ENCODE measurements at regions of chr9 and their contacts with region 1.

Region 1: DNA sequence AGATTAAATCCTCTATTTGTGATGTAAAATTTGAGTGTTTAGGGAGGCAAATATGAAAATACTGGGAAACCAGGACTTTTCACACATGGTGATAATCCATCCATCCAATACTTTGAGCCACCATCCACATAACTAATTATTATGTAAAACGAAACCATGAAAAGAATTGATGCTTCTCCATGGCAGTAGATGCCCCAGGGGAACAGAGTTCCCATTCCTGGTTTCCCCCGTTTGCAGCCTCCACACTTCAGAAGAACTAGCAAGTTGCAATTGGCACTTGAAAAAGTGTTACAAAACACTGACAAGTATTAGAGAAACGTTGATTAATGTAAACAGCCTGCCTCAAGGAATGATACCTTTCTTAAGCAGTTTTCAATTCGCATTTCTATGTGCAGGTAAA is 9.7 kb upstream of the TLE1 start:
- DNase-seq: no peak
- ATAC-seq: no peak
- H3K4me3 Mint-ChIP-seq: no peak overlapping the region
- H3K27ac Mint-ChIP-seq: no peak overlapping the region; the same call in 1 of the 2 replicates
- H3K4me1 Mint-ChIP-seq: peaks cover 35% of the 10 kb centered on the region
- H3K27me3 Mint-ChIP-seq: no peaks in the 10 kb centered on the region
- CTCF ChIP-seq: no peak

Region 2: DNA sequence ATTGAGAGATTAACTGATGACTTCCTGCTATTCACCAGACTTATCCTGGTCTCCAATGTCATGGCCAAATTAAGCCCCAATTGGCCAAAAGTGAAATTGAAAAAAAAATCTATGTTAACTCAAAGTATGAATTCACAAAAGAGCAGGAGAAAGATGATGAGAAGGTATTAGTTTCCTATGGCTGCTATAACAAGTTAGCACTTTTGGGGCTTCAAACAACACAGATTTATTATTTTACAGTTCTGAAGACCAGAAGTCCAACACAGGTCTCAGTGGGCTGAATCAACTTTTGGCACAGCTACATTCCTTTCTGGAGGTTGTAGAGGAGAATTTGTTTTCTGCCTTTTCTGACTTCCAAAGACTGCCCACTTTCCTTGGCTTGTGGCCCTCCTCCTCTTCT is 68.8 kb after region 1 on chr9:
- CTCF ChIA-PET with region 1: no interaction called
- POLR2A ChIA-PET with region 1: no interaction called
- DNase-seq: no peak
- ATAC-seq: no peak
- H3K4me3 Mint-ChIP-seq: no peak overlapping the region
- H3K27ac Mint-ChIP-seq: no peak overlapping the region
- H3K4me1 Mint-ChIP-seq: peaks cover 12% of the 10 kb centered on the region
- H3K27me3 Mint-ChIP-seq: no peaks in the 10 kb centered on the region
- CTCF ChIP-seq: no peak

Region 3: DNA sequence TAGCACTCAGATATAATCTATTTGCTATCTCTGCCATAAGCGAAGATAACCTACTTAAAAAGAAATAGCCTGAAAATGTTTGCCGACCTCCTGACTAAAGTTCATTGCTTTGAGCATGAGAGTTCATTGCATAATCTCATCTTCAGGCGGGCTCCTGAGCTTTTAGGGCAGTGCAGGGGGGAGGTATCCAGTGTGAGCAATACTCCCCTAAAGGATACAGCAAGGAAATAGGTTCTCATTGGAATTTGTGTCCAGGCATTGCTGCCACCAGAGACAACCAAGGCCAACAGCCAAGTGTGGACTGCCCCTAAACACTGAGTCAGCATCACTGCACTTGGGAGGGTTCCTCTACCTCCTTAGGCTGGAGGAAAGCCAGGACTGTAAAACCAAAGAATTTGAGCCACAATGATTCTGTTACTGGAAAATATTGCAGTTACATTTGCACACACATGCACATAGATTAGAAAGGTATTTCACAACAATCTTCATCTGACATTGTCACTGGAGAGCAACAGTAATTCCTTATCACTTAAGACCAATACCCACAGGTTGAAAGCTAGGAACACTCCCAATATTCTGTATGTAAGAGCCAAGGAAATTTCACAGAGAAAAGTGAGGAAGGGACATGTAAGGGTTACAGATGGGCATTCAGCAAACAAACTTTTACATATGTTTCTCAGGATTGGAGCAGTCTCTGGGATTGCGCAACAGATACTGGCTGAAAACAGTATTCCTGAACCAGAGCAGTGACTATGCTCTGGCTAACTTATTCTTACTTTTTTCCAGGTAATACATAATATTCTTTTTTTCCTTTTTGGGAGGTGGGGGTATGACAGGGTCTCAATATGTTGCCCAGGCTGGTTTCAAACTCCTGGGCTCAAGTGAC is 88.9 kb after region 1 on chr9:
- CTCF ChIA-PET with region 1: no interaction called
- POLR2A ChIA-PET with region 1: no interaction called
- DNase-seq: no peak
- ATAC-seq: no peak
- H3K4me3 Mint-ChIP-seq: no peak overlapping the region
- H3K27ac Mint-ChIP-seq: no peak overlapping the region
- H3K4me1 Mint-ChIP-seq: peaks cover 19% of the 10 kb centered on the region
- H3K27me3 Mint-ChIP-seq: no peaks in the 10 kb centered on the region
- CTCF ChIP-seq: no peak

Region 4: DNA sequence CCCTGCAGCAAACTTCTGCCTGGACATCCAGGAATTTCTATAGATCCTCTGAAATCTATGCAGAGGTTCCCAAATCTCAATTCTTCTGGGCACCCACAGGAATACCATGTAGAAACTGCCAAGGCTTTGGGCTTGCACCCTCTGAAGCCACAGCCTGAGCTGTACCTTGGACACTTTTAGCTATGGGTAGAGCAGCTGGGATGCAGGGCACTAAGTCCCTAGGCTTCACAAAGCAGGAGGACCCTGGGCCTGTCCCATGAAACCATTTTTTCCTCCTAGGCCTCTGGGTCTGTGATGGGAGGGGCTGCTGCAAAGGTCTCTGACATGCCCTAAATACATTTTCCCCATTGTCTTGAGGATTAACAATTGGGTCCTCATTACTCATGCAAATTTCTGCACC is 256.5 kb after region 1 on chr9:
- CTCF ChIA-PET with region 1: no interaction called
- POLR2A ChIA-PET with region 1: interaction called, 10 read pairs
- DNase-seq: no peak
- ATAC-seq: no peak
- H3K4me3 Mint-ChIP-seq: no peak overlapping the region
- H3K27ac Mint-ChIP-seq: no peak overlapping the region
- H3K4me1 Mint-ChIP-seq: no peaks in the 10 kb centered on the region
- H3K27me3 Mint-ChIP-seq: peaks cover 7% of the 10 kb centered on the region; the same call in 1 of the 2 replicates
- CTCF ChIP-seq: no peak

Measured in WTC11 (cell line).